GM12878 (cell line): ENCODE measurements at regions of chr1 and their contacts with region 1.

Region 1: GRCh38 chr1:45011837-45012638 is at the start of gene UROD:
- DNase-seq: peak; percentile 90
- ATAC-seq: peak; percentile 83
- H3K4me3 ChIP-seq: peak within 1 kb of the TSS; percentile 90
- H3K27ac ChIP-seq: peak within 1 kb of the TSS; percentile 79
- H3K4me1 ChIP-seq: peaks cover 17% of the 10 kb centered on the region
- H3K27me3 ChIP-seq: no peaks in the 10 kb centered on the region
- CTCF ChIP-seq: no peak
- EP300 ChIP-seq: peak in 1 of 2 experiments; percentile 73; a peak in 2 of 4 replicates
- POLR2A ChIP-seq: peak; percentile 86
- RAD21 ChIP-seq: no peak
- polyA plus RNA-seq, gene UROD: 236 to 330 TPM

Region 2: GRCh38 chr1:44721485-44722361 is 290.3 kb before region 1 on chr1:
- CTCF ChIA-PET with region 1: interaction called, 35 read pairs
- POLR2A ChIA-PET with region 1: interaction called, 11 read pairs
- RAD21 ChIA-PET with region 1: interaction called, 5 read pairs
- SMC1A ChIA-PET with region 1: interaction called, 4 read pairs
- in situ Hi-C with region 1: no loop called
- intact Hi-C with region 1: no loop called
- DNase-seq: peak; percentile 99
- ATAC-seq: peak; percentile 91
- H3K4me3 ChIP-seq: no peak overlapping the region
- H3K27ac ChIP-seq: peak overlapping the region; percentile 99
- H3K4me1 ChIP-seq: peaks cover 49% of the 10 kb centered on the region
- H3K27me3 ChIP-seq: no peaks in the 10 kb centered on the region
- CTCF ChIP-seq: peak in 1 of 3 experiments; percentile 16; a peak in 1 of 6 replicates
- EP300 ChIP-seq: no peak
- POLR2A ChIP-seq: peak; percentile 97
- RAD21 ChIP-seq: peak; percentile 18; the same call in 1 of the 2 replicates

Region 3: DNA sequence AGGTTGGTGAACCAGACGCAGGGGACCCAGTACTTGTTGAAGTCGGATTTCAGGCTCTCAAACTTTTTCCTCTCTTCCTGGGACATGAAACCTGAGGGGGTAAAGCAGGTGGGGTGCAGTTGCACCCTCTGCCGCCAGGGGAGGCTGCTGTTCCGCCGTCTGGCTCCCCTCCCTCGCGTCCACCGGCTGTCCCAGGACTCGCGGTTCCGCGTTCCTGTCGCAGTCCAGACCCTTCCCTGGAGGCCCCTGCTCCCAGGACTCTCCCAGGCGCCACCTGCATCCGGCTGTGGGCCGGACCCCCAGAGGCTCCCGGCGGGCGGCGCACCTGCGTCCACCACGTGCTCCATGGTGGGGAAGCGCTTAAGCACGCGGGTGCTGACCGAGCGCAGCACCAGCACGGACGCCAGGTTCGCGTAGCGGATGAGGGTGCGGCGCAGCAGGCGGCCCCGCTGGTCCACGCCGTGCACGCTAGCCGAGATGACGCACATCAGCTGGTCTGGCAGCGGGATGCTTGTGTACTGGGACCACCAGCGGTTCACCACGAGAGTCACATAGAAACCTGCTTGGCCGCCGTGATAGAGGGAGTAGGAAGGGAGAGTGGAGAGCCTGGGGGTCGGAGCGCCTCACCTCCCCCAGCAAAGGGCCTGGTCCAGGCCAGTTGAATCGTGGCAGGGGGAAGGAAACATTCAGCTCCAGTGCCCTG is 225.7 kb before region 1 on chr1:
- CTCF ChIA-PET with region 1: interaction called, 19 read pairs
- POLR2A ChIA-PET with region 1: interaction called, 4 read pairs
- RAD21 ChIA-PET with region 1: interaction called, 11 read pairs
- SMC1A ChIA-PET with region 1: interaction called, 12 read pairs
- in situ Hi-C with region 1: no loop called
- intact Hi-C with region 1: no loop called
- DNase-seq: no peak
- ATAC-seq: peak; percentile 70
- H3K4me3 ChIP-seq: peak overlapping the region; percentile 46; the same call in 1 of the 2 replicates
- H3K27ac ChIP-seq: no peak overlapping the region
- H3K4me1 ChIP-seq: peaks cover 30% of the 10 kb centered on the region
- H3K27me3 ChIP-seq: no peaks in the 10 kb centered on the region
- CTCF ChIP-seq: peak; percentile 85 to 100 (median 99)
- EP300 ChIP-seq: no peak
- POLR2A ChIP-seq: peak; percentile 76
- RAD21 ChIP-seq: peak; percentile 65

Region 4: GRCh38 chr1:44799770-44800584 is 212.1 kb before region 1 on chr1 and contains the start of gene PLK3:
- CTCF ChIA-PET with region 1: interaction called, 32 read pairs
- POLR2A ChIA-PET with region 1: interaction called, 3 read pairs
- RAD21 ChIA-PET with region 1: interaction called, 24 read pairs
- SMC1A ChIA-PET with region 1: interaction called, 10 read pairs
- in situ Hi-C with region 1: no loop called
- intact Hi-C with region 1: no loop called
- DNase-seq: peak; percentile 91
- ATAC-seq: peak; percentile 91
- H3K4me3 ChIP-seq: peak within 1 kb of the TSS; percentile 94
- H3K27ac ChIP-seq: peak within 1 kb of the TSS; percentile 84
- H3K4me1 ChIP-seq: peaks cover 11% of the 10 kb centered on the region
- H3K27me3 ChIP-seq: no peaks in the 10 kb centered on the region
- CTCF ChIP-seq: peak; percentile 92 to 97 (median 95)
- EP300 ChIP-seq: no peak
- POLR2A ChIP-seq: peak; percentile 90
- RAD21 ChIP-seq: peak; percentile 86
- polyA plus RNA-seq, gene PLK3: 1.5 to 1.9 TPM

Region 5: DNA sequence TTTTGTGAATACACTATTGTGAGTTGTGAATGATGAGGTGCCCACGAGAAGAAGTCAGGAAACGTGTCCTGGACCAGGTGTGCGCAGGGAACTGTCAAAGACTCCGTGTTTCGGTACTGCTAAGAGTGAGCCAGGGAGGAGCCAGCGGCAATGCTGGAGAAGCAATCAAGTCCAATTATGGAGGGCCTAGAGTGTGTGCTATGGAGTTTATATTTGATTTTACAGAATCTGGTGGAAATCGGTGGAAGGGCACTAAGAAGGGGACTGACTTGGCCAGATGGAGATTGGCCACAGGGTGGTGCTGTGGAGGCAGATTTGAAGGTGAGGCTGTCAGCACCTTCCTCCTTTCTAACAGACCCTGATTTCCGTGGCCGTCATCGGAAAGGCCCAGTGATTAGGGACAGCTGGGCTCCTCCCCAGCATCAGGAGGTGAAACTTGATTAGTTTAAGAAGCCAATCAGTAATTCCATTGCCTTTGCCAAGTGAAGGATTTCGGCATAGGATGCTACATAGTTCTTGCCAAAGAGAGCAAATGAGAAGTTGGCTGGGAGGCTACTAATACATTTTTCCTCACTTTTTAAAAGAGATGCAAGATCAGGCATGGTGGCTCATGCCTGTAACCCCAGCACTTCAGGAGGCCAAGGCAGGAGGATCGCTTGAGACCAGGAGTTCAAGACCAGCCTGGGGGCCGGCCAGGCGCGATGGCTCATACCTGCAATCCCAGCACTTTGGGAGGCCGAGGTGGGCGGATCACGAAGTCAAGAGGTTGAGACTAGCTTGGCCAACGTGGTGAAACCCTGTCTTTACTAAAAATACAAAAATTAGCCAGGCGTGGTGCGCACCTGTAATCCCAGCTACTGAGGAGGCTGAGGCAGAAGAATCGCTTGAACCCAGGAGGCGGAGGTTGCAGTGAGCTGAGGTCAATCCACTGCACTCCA is 176.0 kb before region 1 on chr1:
- CTCF ChIA-PET with region 1: interaction called, 24 read pairs
- POLR2A ChIA-PET with region 1: interaction called, 5 read pairs
- RAD21 ChIA-PET with region 1: interaction called, 19 read pairs
- SMC1A ChIA-PET with region 1: interaction called, 13 read pairs
- in situ Hi-C with region 1: no loop called
- intact Hi-C with region 1: loop called (anchors 1 kb)
- DNase-seq: peak; percentile 55
- ATAC-seq: peak; percentile 98
- H3K4me3 ChIP-seq: no peak overlapping the region
- H3K27ac ChIP-seq: no peak overlapping the region
- H3K4me1 ChIP-seq: no peaks in the 10 kb centered on the region
- H3K27me3 ChIP-seq: no peaks in the 10 kb centered on the region
- CTCF ChIP-seq: peak; percentile 84 to 96 (median 91)
- EP300 ChIP-seq: no peak
- POLR2A ChIP-seq: no peak
- RAD21 ChIP-seq: peak; percentile 73

Region 6: GRCh38 chr1:45230540-45230939 is 218.5 kb after region 1 on chr1:
- CTCF ChIA-PET with region 1: no interaction called
- POLR2A ChIA-PET with region 1: no interaction called
- RAD21 ChIA-PET with region 1: no interaction called
- SMC1A ChIA-PET with region 1: no interaction called
- in situ Hi-C with region 1: no loop called
- intact Hi-C with region 1: loop called (anchors 10 kb)
- DNase-seq: no peak
- ATAC-seq: 0 out of 3 replicates have a peak, but pooled peaks have one; percentile 21
- H3K4me3 ChIP-seq: no peak overlapping the region
- H3K27ac ChIP-seq: no peak overlapping the region
- H3K4me1 ChIP-seq: no peaks in the 10 kb centered on the region
- H3K27me3 ChIP-seq: no peaks in the 10 kb centered on the region; a peak in 1 of 4 replicates
- CTCF ChIP-seq: peak in 1 of 3 experiments; percentile 15; a peak in 2 of 6 replicates
- EP300 ChIP-seq: no peak
- POLR2A ChIP-seq: no peak
- RAD21 ChIP-seq: peak; percentile 49

Region 7: DNA sequence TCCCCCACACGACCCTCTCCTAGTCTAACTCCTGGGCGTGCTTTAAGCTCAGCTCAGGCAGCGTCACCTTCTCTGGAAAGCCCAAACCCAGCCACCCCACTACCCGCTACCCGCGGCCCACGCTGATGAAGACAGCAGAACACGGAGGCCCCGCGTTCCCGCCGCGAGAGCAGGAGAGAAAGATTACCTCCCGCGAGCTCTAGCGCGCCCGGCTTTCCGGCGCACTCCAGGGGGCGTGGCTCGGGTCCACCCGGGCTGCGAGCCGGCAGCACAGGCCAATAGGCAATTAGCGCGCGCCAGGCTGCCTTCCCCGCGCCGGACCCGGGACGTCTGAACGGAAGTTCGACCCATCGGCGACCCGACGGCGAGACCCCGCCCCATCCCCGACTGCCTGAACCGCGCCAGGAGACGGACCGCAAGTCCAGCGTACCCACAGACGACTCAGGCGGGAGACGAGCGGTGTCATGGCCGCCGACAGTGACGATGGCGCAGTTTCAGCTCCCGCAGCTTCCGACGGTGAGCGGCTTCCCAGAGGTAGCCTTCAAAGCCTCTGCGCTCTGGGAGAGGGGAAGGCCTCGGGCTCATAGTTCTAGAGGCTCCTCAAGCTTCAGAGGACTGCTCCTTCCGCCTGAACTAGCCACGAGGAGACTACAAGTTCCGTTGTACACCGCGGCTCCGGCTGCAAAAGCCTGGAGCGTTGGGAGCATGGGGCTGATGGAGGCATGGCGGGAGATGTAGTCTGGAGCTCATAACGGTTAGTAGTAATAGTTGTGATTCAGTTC is 327.9 kb after region 1 on chr1 and contains the starts of genes MUTYH and TOE1:
- CTCF ChIA-PET with region 1: interaction called, 9 read pairs
- POLR2A ChIA-PET with region 1: interaction called, 8 read pairs
- RAD21 ChIA-PET with region 1: interaction called, 50 read pairs
- SMC1A ChIA-PET with region 1: interaction called, 8 read pairs
- in situ Hi-C with region 1: no loop called
- intact Hi-C with region 1: loop called (anchors 5 kb)
- DNase-seq: peak; percentile 73
- ATAC-seq: peak; percentile 92
- H3K4me3 ChIP-seq: peak within 1 kb of the TSS; percentile 71
- H3K27ac ChIP-seq: peak within 1 kb of the TSS; percentile 93
- H3K4me1 ChIP-seq: peaks cover 11% of the 10 kb centered on the region
- H3K27me3 ChIP-seq: no peaks in the 10 kb centered on the region
- CTCF ChIP-seq: no peak
- EP300 ChIP-seq: no peak
- POLR2A ChIP-seq: peak; percentile 97
- RAD21 ChIP-seq: no peak
- polyA plus RNA-seq, gene MUTYH: 2.5 to 10.5 TPM
- polyA plus RNA-seq, gene TOE1: 33.5 to 38.0 TPM